ENCODE measurements at regions of chr16 and their contacts with region 1.

Region 1: DNA sequence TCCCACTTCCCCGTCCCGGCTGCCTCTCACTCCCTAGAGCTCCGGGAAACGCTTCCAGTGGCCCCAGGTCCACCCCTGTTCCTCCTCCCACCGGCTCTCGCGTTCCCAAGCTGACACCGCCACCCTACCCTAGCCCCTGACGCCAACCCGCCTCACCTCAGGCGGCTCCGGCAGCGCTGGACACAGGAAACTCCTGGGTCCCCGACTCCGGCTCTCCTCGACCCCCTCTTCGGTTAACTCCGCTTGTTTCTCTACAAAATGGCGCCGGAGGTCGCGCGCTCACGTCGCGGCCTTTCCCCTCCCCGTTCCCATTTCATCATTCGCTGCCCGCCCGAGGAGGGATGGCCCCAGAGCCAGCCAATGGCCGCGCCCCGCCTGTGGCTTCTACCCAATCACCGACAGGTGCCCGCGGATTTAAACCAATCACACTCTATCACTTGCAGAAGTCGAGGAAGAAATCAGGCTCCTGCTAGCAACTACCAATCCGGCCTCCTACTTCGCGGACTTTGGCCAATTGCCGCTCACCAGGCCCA is at the start of gene CNOT1:
- DNase-seq: peak; percentile 92 to 100 (median 99)
- ATAC-seq: peak; percentile 91
- H3K4me3 ChIP-seq: peak within 1 kb of the TSS; percentile 84
- H3K4me3 Mint-ChIP-seq: peak within 1 kb of the TSS; percentile 94 to 100 (median 98)
- H3K27ac ChIP-seq: peak within 1 kb of the TSS; percentile 96
- H3K27ac Mint-ChIP-seq: peak within 1 kb of the TSS; percentile 99 to 100 (median 100)
- H3K4me1 ChIP-seq: peaks cover 14 to 24% of the 10 kb centered on the region in 2 donors
- H3K4me1 Mint-ChIP-seq: peaks cover 16 to 47% (median 31%) of the 10 kb centered on the region in 7 donors
- H3K27me3 ChIP-seq: no peaks in the 10 kb centered on the region
- H3K27me3 Mint-ChIP-seq: peaks cover 0 to 2% (median 0%) of the 10 kb centered on the region in 5 donors
- total RNA-seq, gene CNOT1: 216 to 249 (median 236) TPM

Region 2: GRCh38 chr16:57906382-57907316 is 723.0 kb before region 1 on chr16:
- CTCF ChIA-PET with region 1: no interaction called
- POLR2A ChIA-PET with region 1: no interaction called
- intact Hi-C with region 1: no loop called
- DNase-seq: peak in 5 of 9 donors; percentile 6 to 27 (median 16)
- ATAC-seq: peak; percentile 54
- H3K4me3 ChIP-seq: no peak overlapping the region
- H3K4me3 Mint-ChIP-seq: no peak overlapping the region
- H3K27ac ChIP-seq: no peak overlapping the region
- H3K27ac Mint-ChIP-seq: no peak overlapping the region
- H3K4me1 ChIP-seq: no peaks in the 10 kb centered on the region
- H3K4me1 Mint-ChIP-seq: no peaks in the 10 kb centered on the region
- H3K27me3 ChIP-seq: no peaks in the 10 kb centered on the region
- H3K27me3 Mint-ChIP-seq: peaks cover 4 to 10% (median 6%) of the 10 kb centered on the region in 5 donors

Region 3: GRCh38 chr16:57984331-57985203 is 645.1 kb before region 1 on chr16:
- CTCF ChIA-PET with region 1: no interaction called
- POLR2A ChIA-PET with region 1: no interaction called
- intact Hi-C with region 1: loop called in 1 of 2 experiments (anchors 1 kb)
- DNase-seq: peak; percentile 75 to 93 (median 90)
- ATAC-seq: peak; percentile 99
- H3K4me3 ChIP-seq: peak overlapping the region; percentile 63
- H3K4me3 Mint-ChIP-seq: peak overlapping the region; percentile 84 to 94 (median 91)
- H3K27ac ChIP-seq: peak overlapping the region; percentile 64
- H3K27ac Mint-ChIP-seq: peak overlapping the region; percentile 37 to 93 (median 72)
- H3K4me1 ChIP-seq: peaks cover 6% of the 10 kb centered on the region in 2 donors
- H3K4me1 Mint-ChIP-seq: peaks cover 2 to 21% (median 8%) of the 10 kb centered on the region in 7 donors
- H3K27me3 ChIP-seq: no peaks in the 10 kb centered on the region
- H3K27me3 Mint-ChIP-seq: peaks cover 0 to 21% (median 0%) of the 10 kb centered on the region in 5 donors

Region 4: GRCh38 chr16:58236231-58236690 is 393.4 kb before region 1 on chr16:
- CTCF ChIA-PET with region 1: no interaction called
- POLR2A ChIA-PET with region 1: no interaction called
- intact Hi-C with region 1: loop called (anchors 1 to 5 kb)
- DNase-seq: peak; percentile 18 to 56 (median 45)
- ATAC-seq: peak; percentile 89
- H3K4me3 ChIP-seq: peak overlapping the region; percentile 64
- H3K4me3 Mint-ChIP-seq: peak overlapping the region; percentile 82 to 93 (median 89)
- H3K27ac ChIP-seq: no peak overlapping the region
- H3K27ac Mint-ChIP-seq: peak overlapping the region in 4 of 9 donors; percentile 5 to 36 (median 23)
- H3K4me1 ChIP-seq: peaks cover 8 to 10% of the 10 kb centered on the region in 2 donors
- H3K4me1 Mint-ChIP-seq: peaks cover 0 to 17% (median 13%) of the 10 kb centered on the region in 7 donors
- H3K27me3 ChIP-seq: no peaks in the 10 kb centered on the region
- H3K27me3 Mint-ChIP-seq: peaks cover 5 to 47% (median 21%) of the 10 kb centered on the region in 5 donors

Region 5: GRCh38 chr16:58471321-58471975 is 158.2 kb before region 1 on chr16:
- CTCF ChIA-PET with region 1: no interaction called
- POLR2A ChIA-PET with region 1: no interaction called
- intact Hi-C with region 1: no loop called
- DNase-seq: no peak
- ATAC-seq: no peak
- H3K4me3 ChIP-seq: no peak overlapping the region
- H3K4me3 Mint-ChIP-seq: no peak overlapping the region
- H3K27ac ChIP-seq: no peak overlapping the region
- H3K27ac Mint-ChIP-seq: no peak overlapping the region
- H3K4me1 ChIP-seq: no peaks in the 10 kb centered on the region
- H3K4me1 Mint-ChIP-seq: peaks cover 0 to 11% (median 0%) of the 10 kb centered on the region in 7 donors
- H3K27me3 ChIP-seq: peaks cover 0 to 4% of the 10 kb centered on the region in 2 donors
- H3K27me3 Mint-ChIP-seq: peaks cover 37 to 51% (median 41%) of the 10 kb centered on the region in 5 donors

Region 6: GRCh38 chr16:58494981-58495520 is 134.6 kb before region 1 on chr16:
- CTCF ChIA-PET with region 1: no interaction called
- POLR2A ChIA-PET with region 1: no interaction called
- intact Hi-C with region 1: loop called in 1 of 2 experiments (anchors 1 kb)
- DNase-seq: peak in 8 of 9 donors; percentile 23 to 83 (median 56)
- ATAC-seq: peak; percentile 63
- H3K4me3 ChIP-seq: no peak overlapping the region
- H3K4me3 Mint-ChIP-seq: peak overlapping the region in 1 of 10 donors; percentile 11
- H3K27ac ChIP-seq: no peak overlapping the region
- H3K27ac Mint-ChIP-seq: peak overlapping the region in 5 of 9 donors; percentile 36 to 75 (median 59)
- H3K4me1 ChIP-seq: peaks cover 0 to 3% of the 10 kb centered on the region in 2 donors
- H3K4me1 Mint-ChIP-seq: peaks cover 0 to 14% (median 3%) of the 10 kb centered on the region in 7 donors
- H3K27me3 ChIP-seq: no peaks in the 10 kb centered on the region
- H3K27me3 Mint-ChIP-seq: peaks cover 0 to 14% (median 0%) of the 10 kb centered on the region in 5 donors

Region 7: DNA sequence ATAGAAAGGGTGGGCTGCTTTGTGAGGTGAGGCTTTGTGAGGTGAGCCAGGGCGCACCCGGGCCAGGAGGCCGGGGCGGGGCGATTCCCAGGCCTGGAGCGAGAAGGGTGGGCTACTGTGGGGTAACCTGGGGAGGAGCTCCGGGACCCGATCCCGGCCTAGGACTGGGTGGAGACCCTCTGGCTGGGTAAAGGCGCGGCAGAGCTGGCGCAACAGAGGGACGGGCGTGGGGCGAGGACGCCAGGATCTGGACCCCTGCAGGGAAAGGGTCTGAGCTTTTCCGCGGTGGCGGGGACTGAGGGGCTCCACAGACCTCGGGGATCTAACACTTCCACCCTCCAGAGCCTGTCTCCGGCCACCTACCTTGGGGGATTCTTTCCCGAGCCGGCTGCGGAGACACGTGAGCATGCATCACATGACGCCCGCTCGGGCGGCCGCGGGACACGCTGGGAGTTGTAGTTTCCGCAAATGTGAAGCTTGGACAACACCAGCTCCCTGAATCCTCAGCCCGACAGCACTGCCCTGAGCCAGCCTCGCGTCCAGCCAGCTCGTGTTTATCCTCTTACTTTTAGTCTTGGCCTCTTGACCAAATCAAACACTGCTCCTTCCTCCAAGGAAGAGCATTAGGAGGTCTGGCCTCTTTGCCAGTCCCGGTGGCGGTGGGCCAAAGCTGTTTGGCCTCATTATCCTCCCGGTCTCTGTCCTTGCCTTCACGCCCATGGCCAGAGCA is 54.9 kb after region 1 on chr16 and contains the start of gene SLC38A7:
- CTCF ChIA-PET with region 1: no interaction called
- POLR2A ChIA-PET with region 1: interaction called, 3 read pairs
- intact Hi-C with region 1: loop called (anchors 1 kb)
- DNase-seq: peak; percentile 49 to 73 (median 60)
- ATAC-seq: peak; percentile 88
- H3K4me3 ChIP-seq: peak within 1 kb of the TSS; percentile 78
- H3K4me3 Mint-ChIP-seq: peak within 1 kb of the TSS; percentile 86 to 95 (median 91)
- H3K27ac ChIP-seq: peak within 1 kb of the TSS; percentile 71
- H3K27ac Mint-ChIP-seq: peak within 1 kb of the TSS; percentile 52 to 91 (median 86)
- H3K4me1 ChIP-seq: peaks cover 12 to 20% of the 10 kb centered on the region in 2 donors
- H3K4me1 Mint-ChIP-seq: peaks cover 6 to 27% (median 22%) of the 10 kb centered on the region in 7 donors
- H3K27me3 ChIP-seq: no peaks in the 10 kb centered on the region
- H3K27me3 Mint-ChIP-seq: peaks cover 0 to 4% (median 0%) of the 10 kb centered on the region in 5 donors
- total RNA-seq, gene SLC38A7: 10.2 to 16.8 (median 16.7) TPM